ENCODE measurements at regions of chr4 and their contacts with region 1.

Region 1: DNA sequence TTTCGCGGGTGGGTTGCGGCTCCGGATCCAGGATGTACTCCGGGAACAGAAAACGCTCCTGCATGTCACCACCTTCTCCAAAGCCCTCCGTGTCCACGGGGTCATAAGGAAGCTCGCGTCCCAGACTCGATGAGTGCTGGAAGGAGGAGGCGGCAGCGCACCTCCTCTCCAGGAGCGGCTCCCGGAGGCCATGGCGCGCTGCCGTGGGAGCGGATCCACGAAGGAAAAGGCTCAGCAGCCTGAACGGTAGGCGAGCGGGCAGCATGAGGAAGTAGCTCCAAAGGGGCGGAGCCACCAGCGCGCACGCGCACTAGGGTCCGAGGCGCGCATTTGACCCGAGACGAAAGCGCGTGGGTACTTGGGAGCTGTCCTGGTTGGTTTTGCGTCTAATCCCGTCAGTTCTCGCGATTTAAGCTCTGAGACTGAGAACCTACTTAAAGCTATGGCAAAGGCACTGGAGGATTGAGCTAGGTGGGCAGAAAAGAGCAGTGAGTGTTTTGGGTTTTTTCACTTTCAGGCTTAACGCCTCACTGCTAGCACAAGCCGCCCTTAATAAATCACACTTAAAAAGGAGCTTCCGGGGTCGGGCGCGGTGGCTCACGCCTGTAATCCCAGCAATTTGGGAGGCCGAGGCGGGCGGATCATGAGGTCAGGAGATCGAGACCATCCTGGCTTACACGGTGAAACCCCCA is at the start of gene NOA1:
- DNase-seq: peak; percentile 99
- ATAC-seq: peak; percentile 87
- H3K4me3 ChIP-seq: peak within 1 kb of the TSS; percentile 92
- H3K27ac ChIP-seq: peak within 1 kb of the TSS; percentile 92
- H3K4me1 ChIP-seq: peaks cover 4% of the 10 kb centered on the region
- H3K27me3 ChIP-seq: no peaks in the 10 kb centered on the region
- CTCF ChIP-seq: no peak
- EP300 ChIP-seq: 0 out of 4 replicates have a peak, but pooled peaks of 1 of the 2 experiments have one; percentile 15
- POLR2A ChIP-seq: peak; percentile 88
- RAD21 ChIP-seq: no peak
- polyA plus RNA-seq, gene NOA1: 3.2 to 8.3 TPM

Region 2: DNA sequence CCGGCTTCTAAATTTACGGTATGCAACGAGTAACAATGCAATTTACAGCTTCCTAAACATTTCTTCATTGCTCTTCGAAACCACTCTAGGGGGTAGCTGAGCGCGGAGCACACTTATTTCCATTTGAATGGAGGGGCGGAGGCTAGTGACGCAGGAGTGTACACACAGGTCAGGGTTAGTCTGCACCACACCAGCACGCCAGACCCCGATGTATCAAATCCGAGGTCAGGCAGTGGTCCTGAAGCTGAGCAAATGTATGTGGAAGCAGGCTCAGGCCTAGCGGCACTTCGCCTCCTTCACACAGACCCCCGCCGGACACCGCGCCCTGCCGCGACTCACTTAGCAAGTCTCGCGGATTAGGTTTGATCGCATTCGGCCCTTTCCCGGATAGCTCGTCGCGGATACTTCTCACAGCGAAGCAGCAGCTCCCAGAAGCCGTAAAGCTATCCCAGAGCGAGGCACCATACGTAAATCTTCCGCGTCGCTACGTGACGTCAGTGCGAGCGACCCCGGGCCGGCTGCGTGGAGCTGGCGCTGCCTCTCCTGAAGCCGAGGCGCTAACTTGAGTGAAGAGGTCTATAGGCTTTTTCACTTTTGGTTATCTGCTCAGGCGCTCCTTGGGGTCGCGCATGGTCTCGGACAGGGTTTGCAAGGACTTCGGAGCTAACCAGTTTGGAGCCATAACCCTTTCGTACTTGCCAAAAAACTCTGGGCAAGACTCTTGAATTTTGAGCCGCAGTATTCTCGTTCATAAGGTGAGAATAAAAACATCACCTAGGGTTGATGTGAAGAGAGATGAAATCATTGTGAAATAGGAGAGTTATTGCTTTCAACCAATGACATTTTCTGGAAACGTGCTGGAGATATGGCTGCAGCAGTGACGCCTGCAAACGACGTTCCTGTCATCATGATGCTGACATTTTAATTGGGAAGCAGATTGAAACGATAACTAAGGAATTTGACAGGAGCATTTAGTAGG is 590.2 kb before region 1 on chr4 and contains the start of gene AASDH:
- CTCF ChIA-PET with region 1: no interaction called
- POLR2A ChIA-PET with region 1: interaction called, 14 read pairs
- RAD21 ChIA-PET with region 1: no interaction called
- SMC1A ChIA-PET with region 1: no interaction called
- in situ Hi-C with region 1: no loop called
- intact Hi-C with region 1: no loop called
- DNase-seq: peak; percentile 87
- ATAC-seq: peak; percentile 96
- H3K4me3 ChIP-seq: peak within 1 kb of the TSS; percentile 83
- H3K27ac ChIP-seq: peak within 1 kb of the TSS; percentile 90
- H3K4me1 ChIP-seq: peaks cover 5% of the 10 kb centered on the region
- H3K27me3 ChIP-seq: no peaks in the 10 kb centered on the region
- CTCF ChIP-seq: no peak
- EP300 ChIP-seq: no peak
- POLR2A ChIP-seq: peak; percentile 97
- RAD21 ChIP-seq: no peak
- polyA plus RNA-seq, gene AASDH: 11.6 to 19.1 TPM

Region 3: GRCh38 chr4:56907489-56908205 is 69.8 kb before region 1 on chr4 and contains the start of gene REST:
- CTCF ChIA-PET with region 1: interaction called, 6 read pairs
- POLR2A ChIA-PET with region 1: interaction called, 31 read pairs
- RAD21 ChIA-PET with region 1: interaction called, 43 read pairs
- SMC1A ChIA-PET with region 1: interaction called, 18 read pairs
- in situ Hi-C with region 1: no loop called
- intact Hi-C with region 1: loop called (anchors 1 kb)
- DNase-seq: no peak
- ATAC-seq: peak; percentile 67
- H3K4me3 ChIP-seq: peak within 1 kb of the TSS; percentile 91
- H3K27ac ChIP-seq: peak within 1 kb of the TSS; percentile 92
- H3K4me1 ChIP-seq: peaks cover 8% of the 10 kb centered on the region; the same call in 1 of the 2 replicates
- H3K27me3 ChIP-seq: no peaks in the 10 kb centered on the region
- CTCF ChIP-seq: no peak
- EP300 ChIP-seq: no peak
- POLR2A ChIP-seq: peak; percentile 77
- RAD21 ChIP-seq: no peak
- polyA plus RNA-seq, gene REST: 3.7 to 8.5 TPM

Region 4: GRCh38 chr4:56959100-56959499 is 18.4 kb before region 1 on chr4:
- CTCF ChIA-PET with region 1: interaction called, 11 read pairs
- POLR2A ChIA-PET with region 1: interaction called, 16 read pairs
- RAD21 ChIA-PET with region 1: no interaction called
- SMC1A ChIA-PET with region 1: interaction called, 14 read pairs
- in situ Hi-C with region 1: no loop called
- intact Hi-C with region 1: no loop called
- DNase-seq: no peak
- ATAC-seq: no peak
- H3K4me3 ChIP-seq: no peak overlapping the region
- H3K27ac ChIP-seq: no peak overlapping the region
- H3K4me1 ChIP-seq: no peaks in the 10 kb centered on the region
- H3K27me3 ChIP-seq: no peaks in the 10 kb centered on the region
- CTCF ChIP-seq: no peak
- EP300 ChIP-seq: no peak
- POLR2A ChIP-seq: no peak
- RAD21 ChIP-seq: no peak

Region 5: DNA sequence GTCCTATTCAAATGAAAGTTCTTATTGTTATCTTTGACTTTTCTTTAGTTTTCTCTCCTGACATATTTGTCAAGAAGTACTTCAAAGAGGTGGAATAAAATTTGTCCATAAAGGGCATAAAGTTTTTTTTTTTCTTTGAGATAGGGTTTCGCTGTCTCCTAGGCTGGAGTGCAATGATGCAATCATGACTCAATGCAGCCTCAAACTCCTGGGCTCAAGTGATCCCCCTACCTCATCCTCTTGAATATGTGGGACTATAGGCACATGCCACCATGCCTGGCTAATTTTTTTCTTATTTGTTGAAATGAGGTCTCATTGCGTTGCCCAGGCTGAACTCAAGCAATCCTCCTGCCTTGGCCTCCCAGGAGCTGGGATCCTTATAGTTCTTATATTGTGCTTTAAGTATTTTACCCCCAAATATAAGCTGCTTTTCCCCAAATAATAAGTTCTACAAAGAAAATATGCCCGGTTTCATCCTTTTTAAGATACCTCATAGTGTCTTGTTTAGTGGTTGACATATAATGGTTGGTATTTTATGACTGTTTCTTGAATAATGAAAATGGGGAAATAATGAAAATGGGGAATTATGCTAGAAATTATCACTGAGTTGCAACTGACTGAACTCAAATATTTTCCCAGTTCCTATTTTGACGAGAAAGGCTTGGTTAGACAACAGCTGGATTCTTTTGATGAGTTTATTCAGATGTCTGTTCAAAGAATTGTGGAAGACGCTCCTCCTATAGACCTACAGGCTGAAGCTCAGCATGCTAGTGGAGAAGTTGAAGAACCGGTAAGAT is 12.8 kb after region 1 on chr4:
- CTCF ChIA-PET with region 1: interaction called, 7 read pairs
- POLR2A ChIA-PET with region 1: interaction called, 21 read pairs
- RAD21 ChIA-PET with region 1: interaction called, 12 read pairs
- SMC1A ChIA-PET with region 1: interaction called, 8 read pairs
- in situ Hi-C with region 1: no loop called
- intact Hi-C with region 1: no loop called
- DNase-seq: no peak
- ATAC-seq: no peak
- H3K4me3 ChIP-seq: no peak overlapping the region
- H3K27ac ChIP-seq: no peak overlapping the region
- H3K4me1 ChIP-seq: no peaks in the 10 kb centered on the region
- H3K27me3 ChIP-seq: no peaks in the 10 kb centered on the region
- CTCF ChIP-seq: no peak
- EP300 ChIP-seq: no peak
- POLR2A ChIP-seq: no peak
- RAD21 ChIP-seq: no peak

Region 6: DNA sequence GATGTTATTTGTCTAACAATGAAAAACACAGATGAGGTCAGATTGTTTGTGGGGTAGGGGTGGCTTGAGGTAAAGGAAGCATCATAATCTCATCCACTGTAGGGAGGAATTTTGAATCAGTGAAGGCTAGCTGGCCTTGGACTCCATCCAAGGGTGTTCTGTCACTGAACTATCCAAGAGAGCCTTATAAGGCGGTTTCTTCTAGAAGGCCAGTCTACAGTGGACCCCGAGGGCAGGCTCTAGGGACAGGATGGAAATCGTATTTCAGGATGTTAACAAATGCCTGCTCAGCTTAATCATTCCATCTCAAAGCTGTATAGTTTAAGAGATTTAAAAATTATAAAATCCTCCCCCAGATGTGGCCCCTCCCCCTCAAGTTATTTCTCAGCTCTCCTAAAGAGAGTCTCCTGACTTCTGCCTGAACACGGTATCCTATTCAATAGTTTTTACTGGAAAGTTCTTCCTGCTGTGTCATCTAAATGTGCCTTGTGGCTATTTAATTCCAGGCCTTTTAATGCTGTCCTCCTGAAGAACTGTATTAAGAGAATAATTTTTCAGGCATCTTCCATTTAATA is 124.7 kb after region 1 on chr4:
- CTCF ChIA-PET with region 1: no interaction called
- POLR2A ChIA-PET with region 1: no interaction called
- RAD21 ChIA-PET with region 1: no interaction called
- SMC1A ChIA-PET with region 1: no interaction called
- in situ Hi-C with region 1: no loop called
- intact Hi-C with region 1: no loop called
- DNase-seq: no peak
- ATAC-seq: no peak
- H3K4me3 ChIP-seq: no peak overlapping the region
- H3K27ac ChIP-seq: no peak overlapping the region
- H3K4me1 ChIP-seq: no peaks in the 10 kb centered on the region
- H3K27me3 ChIP-seq: peaks cover 0 to 5% of the 10 kb centered on the region in 2 experiments; a peak in 3 of 4 replicates
- CTCF ChIP-seq: no peak
- EP300 ChIP-seq: no peak
- POLR2A ChIP-seq: no peak
- RAD21 ChIP-seq: no peak

Measured in GM12878 (cell line).